Caki2 (cell line): ENCODE measurements at regions of chr7 and their contacts with region 1.

Region 1: DNA sequence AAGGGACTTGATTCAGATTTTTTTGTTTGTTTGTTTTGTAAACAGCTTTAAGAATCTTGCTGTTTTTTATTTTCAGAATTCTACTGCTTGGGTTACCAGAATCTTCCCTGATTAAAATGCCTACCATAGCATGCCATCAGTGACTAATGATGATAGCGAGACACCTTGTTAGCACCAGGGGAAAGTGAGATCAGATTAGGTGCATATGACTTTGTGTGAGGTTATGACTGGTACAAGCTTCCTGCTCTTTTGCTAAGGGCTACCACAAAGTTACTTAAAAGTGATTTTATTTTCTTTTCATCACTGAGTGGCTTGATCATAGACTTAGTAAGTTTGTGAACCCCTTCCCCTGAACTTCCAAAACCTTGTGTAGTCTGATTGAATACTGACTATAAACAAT is 93.5 kb downstream of the SND1 start:
- DNase-seq: no peak

Region 2: DNA sequence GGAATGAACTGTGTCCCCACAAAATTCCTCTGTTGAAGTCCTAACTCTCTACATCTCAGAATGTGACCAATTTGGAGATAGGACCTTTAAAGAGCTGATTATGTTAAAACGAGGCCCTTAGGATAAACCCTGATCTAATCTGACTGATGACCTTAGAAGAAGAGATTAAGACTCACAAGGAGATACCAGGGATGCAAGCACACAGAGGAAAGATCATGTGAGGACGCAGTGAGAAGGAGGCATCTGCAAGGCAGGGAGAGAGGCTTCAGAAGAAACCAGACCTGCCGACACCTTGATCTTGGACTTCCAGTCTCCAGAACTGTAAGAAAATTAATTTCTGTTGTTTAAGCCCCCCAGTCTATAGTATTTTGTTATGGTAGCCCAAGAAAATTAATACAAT is 258.1 kb before region 1 on chr7:
- in situ Hi-C with region 1: no loop called
- DNase-seq: no peak

Region 3: GRCh38 chr7:127983804-127984332 is 238.4 kb after region 1 on chr7:
- in situ Hi-C with region 1: loop called (anchors 10 kb)
- DNase-seq: no peak

Region 4: DNA sequence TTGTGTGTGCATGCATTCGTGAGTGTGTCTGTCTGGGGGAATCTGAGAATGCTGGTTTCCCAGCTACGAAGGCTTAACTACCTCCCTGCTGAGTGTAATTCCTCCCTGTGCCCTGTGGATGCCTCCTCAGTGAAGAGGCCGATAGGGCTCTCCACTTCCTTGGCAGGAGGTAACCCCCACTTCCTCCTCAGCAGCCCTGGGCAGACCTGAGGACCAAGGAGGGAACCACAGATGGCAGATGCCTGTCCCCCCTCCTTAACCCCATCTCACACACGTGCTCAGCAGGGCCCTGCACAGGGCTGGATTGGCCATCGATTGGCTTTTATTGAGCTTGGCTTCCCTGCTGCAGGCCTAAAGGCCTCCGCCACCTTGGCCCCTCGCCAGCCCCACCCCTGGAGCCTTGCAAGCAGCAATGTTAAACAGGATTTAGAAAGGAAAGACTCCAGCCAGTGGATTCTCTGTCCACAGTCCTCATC is 331.4 kb after region 1 on chr7:
- in situ Hi-C with region 1: no loop called
- DNase-seq: no peak